PC-9 (cell line): ENCODE measurements at regions of chr14 and their contacts with region 1.

Region 1: DNA sequence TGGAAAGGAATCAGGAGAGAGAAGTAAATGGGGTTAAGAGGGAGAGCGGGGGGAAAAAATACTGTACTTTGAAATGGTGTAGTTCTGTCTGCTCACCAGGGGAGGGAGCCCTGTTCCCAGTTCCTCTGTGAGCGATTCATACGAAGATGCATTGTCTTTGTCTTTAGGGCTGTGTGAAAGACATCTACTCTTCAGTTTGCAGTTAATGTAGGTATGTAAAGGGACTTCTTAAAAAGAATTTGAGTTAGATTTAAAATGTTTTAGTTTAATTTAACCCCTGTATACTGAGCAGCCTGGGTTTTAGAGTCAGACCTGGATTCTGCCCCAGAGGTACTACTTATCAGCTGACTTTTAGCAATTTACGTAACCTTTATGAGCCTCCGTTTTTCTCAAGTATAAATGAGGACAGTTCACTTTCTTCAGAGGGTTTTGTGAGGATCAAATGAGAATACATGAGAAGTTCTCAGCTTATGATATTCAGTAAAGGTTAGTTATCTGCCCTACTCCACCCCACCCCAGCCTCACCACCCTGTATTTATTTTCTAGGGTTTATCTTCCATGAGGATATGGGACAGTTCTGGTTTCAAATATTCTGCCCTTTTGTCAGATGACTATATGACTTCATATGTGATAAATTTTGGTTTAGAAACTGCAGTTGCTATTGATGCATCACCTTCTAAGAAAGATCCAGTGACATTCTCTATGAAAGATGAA is 82.5 kb upstream of the EVL start:
- DNase-seq: peak in 1 of 2 experiments; percentile 11
- H3K4me3 ChIP-seq: no peak overlapping the region
- H3K27ac ChIP-seq: no peak overlapping the region
- H3K4me1 ChIP-seq: no peaks in the 10 kb centered on the region
- H3K27me3 ChIP-seq: no peaks in the 10 kb centered on the region
- CTCF ChIP-seq: peak; percentile 87

Region 2: GRCh38 chr14:100108042-100108825 is 125.5 kb after region 1 on chr14:
- CTCF ChIA-PET with region 1: no interaction called
- POLR2A ChIA-PET with region 1: no interaction called
- intact Hi-C with region 1: loop called (anchors 1 kb)
- DNase-seq: peak in 1 of 2 experiments; percentile 32
- H3K4me3 ChIP-seq: no peak overlapping the region
- H3K27ac ChIP-seq: no peak overlapping the region
- H3K4me1 ChIP-seq: no peaks in the 10 kb centered on the region
- H3K27me3 ChIP-seq: no peaks in the 10 kb centered on the region
- CTCF ChIP-seq: peak; percentile 83

Region 3: GRCh38 chr14:100155042-100155846 is 172.6 kb after region 1 on chr14:
- CTCF ChIA-PET with region 1: no interaction called
- POLR2A ChIA-PET with region 1: no interaction called
- intact Hi-C with region 1: loop called (anchors 2 kb)
- DNase-seq: peak; percentile 12 to 45
- H3K4me3 ChIP-seq: no peak overlapping the region
- H3K27ac ChIP-seq: no peak overlapping the region
- H3K4me1 ChIP-seq: peaks cover 9% of the 10 kb centered on the region
- H3K27me3 ChIP-seq: no peaks in the 10 kb centered on the region
- CTCF ChIP-seq: peak; percentile 80

Region 4: DNA sequence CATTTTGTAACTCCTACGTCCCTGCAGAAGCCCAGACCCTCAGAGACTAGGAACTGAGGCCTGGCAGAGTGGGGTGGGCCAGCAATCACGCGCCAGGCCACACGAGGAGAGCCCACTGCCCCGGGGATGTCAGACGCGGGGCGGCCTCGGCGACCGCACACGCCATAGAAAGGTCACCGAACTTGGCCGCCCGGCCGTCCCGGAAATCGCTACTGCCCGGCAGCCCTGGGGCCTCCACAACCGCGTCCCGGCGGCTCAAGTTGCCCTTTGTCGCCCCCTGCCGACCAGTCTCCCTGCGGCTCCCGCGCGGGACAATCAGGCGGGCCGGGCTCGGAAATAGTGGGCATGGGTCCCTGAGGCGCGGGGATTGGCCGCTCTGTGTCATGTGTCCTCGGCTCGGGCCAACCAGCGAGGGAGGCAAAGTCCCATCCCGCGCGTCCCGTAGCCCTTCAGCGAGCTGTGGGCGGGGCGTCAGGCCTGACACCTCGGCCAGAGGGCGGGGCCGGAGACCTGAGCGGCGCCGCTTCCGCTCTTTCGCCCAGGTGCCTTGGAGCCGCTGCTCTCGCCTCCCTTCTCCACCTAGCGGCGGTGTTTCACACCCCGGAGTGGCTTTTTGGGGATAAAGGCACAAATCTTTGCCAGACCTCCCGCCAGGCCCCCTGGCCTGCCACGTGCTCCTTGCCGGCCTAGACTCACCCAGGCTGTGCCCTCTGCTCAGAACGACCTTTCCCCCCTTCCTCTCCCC is 210.2 kb after region 1 on chr14:
- CTCF ChIA-PET with region 1: no interaction called
- POLR2A ChIA-PET with region 1: no interaction called
- intact Hi-C with region 1: loop called (anchors 1 kb)
- DNase-seq: peak; percentile 91
- H3K4me3 ChIP-seq: peak overlapping the region; percentile 46; the same call in 1 of the 2 replicates
- H3K27ac ChIP-seq: peak overlapping the region; percentile 51; the same call in 1 of the 2 replicates
- H3K4me1 ChIP-seq: peaks cover 13% of the 10 kb centered on the region; the same call in 1 of the 2 replicates
- H3K27me3 ChIP-seq: no peaks in the 10 kb centered on the region
- CTCF ChIP-seq: peak; percentile 71